ENCODE measurements at regions of chr21 and their contacts with region 1.

Region 1: GRCh38 chr21:26715878-26716506 is 129.2 kb downstream of the ADAMTS1 start:
- DNase-seq: peak in 1 of 2 donors; percentile 19
- ATAC-seq: peak; percentile 73

Region 2: GRCh38 chr21:25881525-25882376 is 834.2 kb before region 1 on chr21:
- intact Hi-C with region 1: loop called (anchors 10 kb)
- DNase-seq: peak in 1 of 2 donors; percentile 69
- ATAC-seq: peak; percentile 58

Region 3: GRCh38 chr21:26469789-26470188 is 246.2 kb before region 1 on chr21:
- intact Hi-C with region 1: no loop called
- DNase-seq: no peak
- ATAC-seq: no peak